ENCODE measurements at regions of chr10 and their contacts with region 1.

Region 1: GRCh38 chr10:128011175-128011979 is 104.5 kb downstream of the PTPRE start:
- DNase-seq: peak; percentile 70
- H3K4me3 Mint-ChIP-seq: peak overlapping the region; percentile 6
- H3K27ac Mint-ChIP-seq: no peak overlapping the region
- H3K4me1 Mint-ChIP-seq: peaks cover 9% of the 10 kb centered on the region
- H3K27me3 Mint-ChIP-seq: no peaks in the 10 kb centered on the region
- CTCF ChIP-seq: peak; percentile 98

Region 2: GRCh38 chr10:127889605-127890195 is 121.7 kb before region 1 on chr10:
- CTCF ChIA-PET with region 1: interaction called, 23 read pairs
- POLR2A ChIA-PET with region 1: interaction called, 3 read pairs
- intact Hi-C with region 1: no loop called
- DNase-seq: peak; percentile 72
- H3K4me3 Mint-ChIP-seq: no peak overlapping the region
- H3K27ac Mint-ChIP-seq: peak overlapping the region; percentile 89
- H3K4me1 Mint-ChIP-seq: peaks cover 15% of the 10 kb centered on the region
- H3K27me3 Mint-ChIP-seq: no peaks in the 10 kb centered on the region
- CTCF ChIP-seq: no peak

Region 3: GRCh38 chr10:127906548-127907377 is 104.6 kb before region 1 on chr10 and contains the start of gene PTPRE:
- CTCF ChIA-PET with region 1: interaction called, 260 read pairs
- POLR2A ChIA-PET with region 1: interaction called, 11 read pairs
- intact Hi-C with region 1: loop called (anchors 1 kb)
- DNase-seq: peak; percentile 69
- H3K4me3 Mint-ChIP-seq: peak within 1 kb of the TSS; percentile 62
- H3K27ac Mint-ChIP-seq: no peak within 1 kb of the TSS
- H3K4me1 Mint-ChIP-seq: peaks cover 7% of the 10 kb centered on the region
- H3K27me3 Mint-ChIP-seq: no peaks in the 10 kb centered on the region
- CTCF ChIP-seq: peak; percentile 90
- total RNA-seq, gene PTPRE: 21.8 and 34.6 TPM in 2 replicates

Region 4: GRCh38 chr10:127919418-127920271 is 91.7 kb before region 1 on chr10:
- CTCF ChIA-PET with region 1: interaction called, 24 read pairs
- POLR2A ChIA-PET with region 1: interaction called, 4 read pairs
- intact Hi-C with region 1: no loop called
- DNase-seq: peak; percentile 54
- H3K4me3 Mint-ChIP-seq: no peak overlapping the region
- H3K27ac Mint-ChIP-seq: no peak overlapping the region
- H3K4me1 Mint-ChIP-seq: peaks cover 26% of the 10 kb centered on the region
- H3K27me3 Mint-ChIP-seq: no peaks in the 10 kb centered on the region
- CTCF ChIP-seq: no peak

Region 5: DNA sequence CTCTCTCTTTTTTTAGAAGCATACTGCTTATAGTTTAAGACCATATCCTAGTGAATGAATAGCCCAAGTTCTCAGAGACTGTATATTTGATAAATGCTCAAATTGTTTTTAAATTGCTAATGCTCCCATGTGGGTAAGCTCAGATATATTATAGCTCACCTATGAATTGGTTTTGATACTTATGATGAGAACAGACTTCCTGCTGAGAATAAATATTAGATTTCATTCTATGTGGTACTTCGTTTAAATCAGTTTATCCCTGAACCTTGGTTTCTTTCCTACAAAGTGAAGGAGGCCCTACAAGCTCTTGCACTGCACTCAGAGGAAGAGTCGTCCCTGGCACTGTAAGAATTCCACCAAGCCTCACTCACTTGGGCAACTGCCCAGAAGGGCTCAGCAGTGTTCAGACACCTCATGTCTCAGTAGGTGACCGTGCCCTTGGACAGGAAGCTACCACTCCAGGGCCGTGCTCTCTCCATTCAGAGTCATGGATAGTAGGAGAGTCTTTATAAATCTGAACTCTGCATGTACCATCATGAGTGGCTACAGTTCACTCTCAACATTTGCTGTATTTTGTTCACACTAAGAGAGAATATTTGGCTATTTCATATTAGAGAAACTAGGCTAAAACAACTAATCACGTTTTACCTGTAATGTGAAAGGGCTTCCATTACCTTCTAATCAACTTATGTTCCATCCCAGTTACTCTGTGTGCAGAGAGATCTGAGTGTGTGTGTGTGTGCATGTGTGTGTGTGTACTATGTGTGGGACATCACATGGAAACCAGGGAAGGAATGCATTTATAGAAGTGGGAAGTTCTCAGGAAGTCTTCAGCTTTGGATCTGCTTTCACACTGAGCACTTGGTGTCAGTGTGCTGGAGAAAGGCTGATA is 10.7 kb before region 1 on chr10:
- CTCF ChIA-PET with region 1: interaction called, 10 read pairs
- POLR2A ChIA-PET with region 1: interaction called, 3 read pairs
- intact Hi-C with region 1: no loop called
- DNase-seq: peak; percentile 62
- H3K4me3 Mint-ChIP-seq: no peak overlapping the region
- H3K27ac Mint-ChIP-seq: no peak overlapping the region
- H3K4me1 Mint-ChIP-seq: peaks cover 18% of the 10 kb centered on the region
- H3K27me3 Mint-ChIP-seq: no peaks in the 10 kb centered on the region
- CTCF ChIP-seq: no peak

Region 6: DNA sequence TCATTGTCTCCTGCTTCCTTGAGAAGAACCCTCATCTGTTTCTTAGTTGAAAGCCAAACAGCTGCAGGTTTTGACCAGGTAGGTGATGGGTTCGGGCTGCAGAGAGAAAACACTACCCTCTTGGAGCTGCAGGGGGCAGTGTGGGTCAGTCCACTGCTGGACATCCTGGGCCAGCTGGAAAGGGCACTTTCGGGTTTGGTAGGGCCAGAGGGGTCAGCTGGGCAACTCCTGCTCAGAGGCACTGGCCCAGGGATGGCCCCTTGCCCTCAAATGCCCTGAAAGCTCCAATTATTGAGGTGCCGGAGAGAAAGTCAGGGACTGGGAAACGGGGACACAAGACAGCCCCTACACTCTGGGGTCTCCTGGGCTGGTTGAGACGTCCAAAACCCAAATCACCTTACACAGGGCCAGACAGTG is 24.2 kb after region 1 on chr10:
- CTCF ChIA-PET with region 1: interaction called, 37 read pairs
- POLR2A ChIA-PET with region 1: no interaction called
- intact Hi-C with region 1: no loop called
- DNase-seq: peak; percentile 64
- H3K4me3 Mint-ChIP-seq: no peak overlapping the region
- H3K27ac Mint-ChIP-seq: no peak overlapping the region
- H3K4me1 Mint-ChIP-seq: peaks cover 22% of the 10 kb centered on the region
- H3K27me3 Mint-ChIP-seq: no peaks in the 10 kb centered on the region
- CTCF ChIP-seq: peak; percentile 82

Region 7: GRCh38 chr10:128087884-128088709 is 76.7 kb after region 1 on chr10:
- CTCF ChIA-PET with region 1: no interaction called
- POLR2A ChIA-PET with region 1: no interaction called
- intact Hi-C with region 1: no loop called
- DNase-seq: peak; percentile 43
- H3K4me3 Mint-ChIP-seq: no peak overlapping the region
- H3K27ac Mint-ChIP-seq: no peak overlapping the region
- H3K4me1 Mint-ChIP-seq: no peaks in the 10 kb centered on the region
- H3K27me3 Mint-ChIP-seq: no peaks in the 10 kb centered on the region
- CTCF ChIP-seq: no peak

Region 8: GRCh38 chr10:128150045-128150493 is 138.7 kb after region 1 on chr10:
- CTCF ChIA-PET with region 1: interaction called, 21 read pairs
- POLR2A ChIA-PET with region 1: no interaction called
- intact Hi-C with region 1: no loop called
- DNase-seq: peak; percentile 72
- H3K4me3 Mint-ChIP-seq: peak overlapping the region; percentile 56
- H3K27ac Mint-ChIP-seq: no peak overlapping the region
- H3K4me1 Mint-ChIP-seq: peaks cover 15% of the 10 kb centered on the region
- H3K27me3 Mint-ChIP-seq: peaks cover 6% of the 10 kb centered on the region
- CTCF ChIP-seq: peak; percentile 93